Caco-2 (cell line): ENCODE measurements at regions of chr22 and their contacts with region 1.

Region 1: DNA sequence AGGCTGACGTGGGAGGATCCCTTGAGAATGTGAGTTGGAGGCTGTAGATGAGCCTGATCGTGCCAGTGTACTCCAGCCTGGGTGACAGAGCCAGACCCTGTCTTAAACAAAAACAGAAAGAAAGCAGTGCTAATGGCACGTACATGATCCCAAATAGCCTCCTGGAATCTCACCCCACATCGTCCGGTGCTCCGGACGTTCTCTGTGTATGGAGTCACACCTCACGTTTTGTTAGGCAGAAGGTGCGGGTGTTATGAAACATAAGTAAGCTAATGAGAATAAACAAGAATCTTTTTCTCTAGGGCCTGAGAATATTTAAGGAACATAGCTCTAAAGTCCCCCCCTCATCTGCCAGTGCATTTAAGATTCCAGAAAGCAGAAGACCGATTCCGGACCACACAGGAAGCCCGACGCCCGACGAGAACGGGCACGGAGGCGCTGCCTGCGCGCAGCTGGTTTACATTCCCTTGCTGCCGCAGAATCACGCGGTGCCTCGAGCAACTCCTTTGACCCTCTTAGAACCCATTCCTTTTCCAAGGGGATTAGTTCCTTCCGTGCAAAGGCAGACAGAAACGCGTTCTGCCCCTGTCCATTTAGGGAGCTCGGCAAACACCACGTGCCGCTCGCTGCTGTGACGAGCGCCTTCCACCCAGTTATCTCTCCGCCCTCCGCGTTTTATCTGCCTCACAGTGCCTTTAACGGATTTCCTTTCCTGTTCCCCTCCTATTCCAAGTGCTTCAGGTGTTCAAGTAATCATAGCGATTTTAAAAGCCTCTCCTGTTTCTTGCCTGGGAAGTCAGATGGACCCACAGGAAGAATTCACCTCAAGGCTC is 23.9 kb upstream of the MICAL3 start:
- DNase-seq: peak; percentile 79 to 84
- H3K4me3 ChIP-seq: peak overlapping the region; percentile 35
- H3K4me3 Mint-ChIP-seq: peak overlapping the region; percentile 72
- H3K27ac Mint-ChIP-seq: peak overlapping the region; percentile 70
- H3K4me1 ChIP-seq: peaks cover 14% of the 10 kb centered on the region
- H3K4me1 Mint-ChIP-seq: peaks cover 15% of the 10 kb centered on the region
- H3K27me3 ChIP-seq: no peaks in the 10 kb centered on the region
- H3K27me3 Mint-ChIP-seq: no peaks in the 10 kb centered on the region
- CTCF ChIP-seq: no peak

Region 2: GRCh38 chr22:18035740-18036139 is 12.5 kb before region 1 on chr22:
- CTCF ChIA-PET with region 1: no interaction called
- POLR2A ChIA-PET with region 1: interaction called, 19 read pairs
- intact Hi-C with region 1: no loop called
- DNase-seq: no peak
- H3K4me3 ChIP-seq: no peak overlapping the region
- H3K4me3 Mint-ChIP-seq: no peak overlapping the region
- H3K27ac Mint-ChIP-seq: no peak overlapping the region
- H3K4me1 ChIP-seq: peaks cover 4% of the 10 kb centered on the region; the same call in 1 of the 2 replicates
- H3K4me1 Mint-ChIP-seq: no peaks in the 10 kb centered on the region
- H3K27me3 ChIP-seq: no peaks in the 10 kb centered on the region
- H3K27me3 Mint-ChIP-seq: no peaks in the 10 kb centered on the region
- CTCF ChIP-seq: no peak

Region 3: GRCh38 chr22:18060646-18061620 is 12.7 kb after region 1 on chr22:
- CTCF ChIA-PET with region 1: interaction called, 3 read pairs
- POLR2A ChIA-PET with region 1: interaction called, 20 read pairs
- intact Hi-C with region 1: no loop called
- DNase-seq: peak; percentile 75 to 77
- H3K4me3 ChIP-seq: no peak overlapping the region; the same call in 1 of the 2 replicates
- H3K4me3 Mint-ChIP-seq: peak overlapping the region; percentile 57
- H3K27ac Mint-ChIP-seq: peak overlapping the region; percentile 96
- H3K4me1 ChIP-seq: peaks cover 72% of the 10 kb centered on the region
- H3K4me1 Mint-ChIP-seq: peaks cover 32% of the 10 kb centered on the region
- H3K27me3 ChIP-seq: no peaks in the 10 kb centered on the region
- H3K27me3 Mint-ChIP-seq: no peaks in the 10 kb centered on the region
- CTCF ChIP-seq: no peak

Region 4: DNA sequence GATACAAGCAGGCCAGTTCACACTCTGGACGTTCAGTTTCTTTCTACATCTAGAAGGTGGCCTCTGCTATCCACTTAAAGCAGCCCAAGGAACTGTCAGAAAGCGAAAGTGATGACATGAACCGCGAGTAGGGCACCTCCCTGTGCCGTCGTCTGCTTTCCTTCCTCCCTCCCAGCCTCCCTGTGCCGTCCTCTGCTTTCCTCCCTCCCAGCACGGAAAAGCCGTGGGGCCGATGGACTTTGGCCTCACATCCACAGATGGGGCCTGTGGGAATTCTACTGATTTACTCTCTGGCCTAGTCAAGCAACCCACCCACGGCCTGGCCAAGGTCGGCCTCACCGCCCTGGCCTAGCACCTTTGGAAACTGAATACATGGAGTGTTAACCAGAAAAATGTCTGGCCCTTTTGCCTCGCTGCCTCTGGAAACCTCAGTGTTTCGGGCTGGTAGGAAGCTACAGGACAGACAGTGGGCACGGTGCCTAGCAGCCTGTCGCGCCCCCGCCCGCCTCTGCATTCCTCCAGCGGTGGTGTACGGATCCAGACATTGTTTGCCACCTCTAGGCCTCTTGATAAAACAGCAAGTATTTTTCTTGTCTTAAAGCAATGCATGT is 43.7 kb after region 1 on chr22:
- CTCF ChIA-PET with region 1: no interaction called
- POLR2A ChIA-PET with region 1: no interaction called
- intact Hi-C with region 1: no loop called
- DNase-seq: peak in 1 of 2 experiments; percentile 51
- H3K4me3 ChIP-seq: no peak overlapping the region
- H3K4me3 Mint-ChIP-seq: no peak overlapping the region
- H3K27ac Mint-ChIP-seq: no peak overlapping the region
- H3K4me1 ChIP-seq: 0 out of 2 replicates have a peak, but pooled peaks cover 5% of the 10 kb centered on the region
- H3K4me1 Mint-ChIP-seq: peaks cover 6% of the 10 kb centered on the region
- H3K27me3 ChIP-seq: no peaks in the 10 kb centered on the region
- H3K27me3 Mint-ChIP-seq: no peaks in the 10 kb centered on the region
- CTCF ChIP-seq: no peak